ENCODE measurements at regions of chr3 and their contacts with region 1.

Region 1: DNA sequence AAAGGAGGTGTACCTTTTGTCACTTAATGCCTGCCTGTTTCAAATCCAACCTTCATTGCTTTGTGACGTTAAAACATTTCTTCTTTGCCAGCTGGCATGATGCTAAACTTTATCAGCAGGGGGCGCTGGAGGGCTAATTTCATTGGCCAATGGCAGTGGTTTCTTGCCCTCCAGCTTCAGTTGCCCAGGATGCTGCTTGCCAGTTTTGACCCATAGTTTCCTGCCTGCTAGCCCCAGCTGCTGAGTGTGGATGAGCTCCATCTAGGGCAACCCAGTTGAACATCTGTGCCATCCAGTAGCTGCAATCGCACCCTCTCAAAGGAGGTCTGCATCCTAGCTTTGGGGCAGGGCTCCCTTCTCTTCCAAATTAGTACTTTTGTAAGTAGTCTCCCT is 22.1 kb downstream of the ACKR2 start:
- DNase-seq: peak; percentile 73
- ATAC-seq: peak; percentile 69 to 80

Region 2: GRCh38 chr3:42732829-42733459 is 98.4 kb before region 1 on chr3:
- intact Hi-C with region 1: no loop called
- DNase-seq: no peak
- ATAC-seq: no peak

Region 3: GRCh38 chr3:42880601-42881451 is 49.5 kb after region 1 on chr3:
- intact Hi-C with region 1: loop called (anchors 1 to 5 kb)
- DNase-seq: peak; percentile 90
- ATAC-seq: peak; percentile 99

Measured in left cardiac atrium (tissue), 4 donors.